Psoas muscle (tissue), 8 donors: ENCODE measurements at regions of chr12 and their contacts with region 1.

Region 1: DNA sequence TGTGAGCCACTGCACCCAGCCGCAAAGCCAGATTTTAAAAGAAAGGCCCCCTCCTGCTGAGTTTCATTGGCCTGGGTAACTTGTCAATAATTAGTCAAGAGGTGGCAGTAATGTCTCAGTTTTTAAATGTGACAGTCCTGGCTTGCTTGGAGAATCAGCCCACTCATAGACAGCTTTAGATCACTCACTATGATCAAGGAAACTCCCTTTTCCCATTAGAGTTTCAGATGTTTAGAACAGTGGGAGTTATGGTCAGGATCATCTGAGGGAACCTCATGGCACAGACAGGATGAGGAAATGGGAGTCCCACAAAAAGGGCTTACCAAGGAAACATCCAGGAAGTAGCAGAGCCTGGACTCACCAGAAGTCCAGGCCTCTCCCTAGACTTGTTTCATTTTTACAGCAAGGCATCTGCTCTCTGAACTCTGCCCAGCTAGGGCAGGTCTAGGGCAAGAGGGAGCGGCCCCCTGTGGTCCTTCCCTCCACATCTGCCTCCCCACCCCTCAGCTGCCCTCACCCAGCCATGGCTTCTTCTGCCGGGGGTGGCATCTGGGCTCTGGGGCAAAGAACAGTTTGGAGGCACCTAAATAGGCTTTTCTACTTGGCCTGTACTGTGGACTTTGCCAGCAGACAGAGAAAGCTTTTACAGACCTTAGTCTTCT is 11.2 kb downstream of the BCL2L14 start:
- DNase-seq: no peak
- ATAC-seq: peak; percentile 58 to 90 (median 75)
- H3K4me3 ChIP-seq: no peak overlapping the region
- H3K27ac ChIP-seq: peak overlapping the region; percentile 39
- H3K4me1 ChIP-seq: no peaks in the 10 kb centered on the region
- H3K27me3 ChIP-seq: no peaks in the 10 kb centered on the region
- CTCF ChIP-seq: peak; percentile 48

Region 2: GRCh38 chr12:12115514-12115913 is 33.5 kb after region 1 on chr12:
- intact Hi-C with region 1: no loop called
- DNase-seq: no peak
- ATAC-seq: no peak
- H3K4me3 ChIP-seq: no peak overlapping the region
- H3K27ac ChIP-seq: no peak overlapping the region
- H3K4me1 ChIP-seq: no peaks in the 10 kb centered on the region
- H3K27me3 ChIP-seq: no peaks in the 10 kb centered on the region
- CTCF ChIP-seq: no peak

Region 3: GRCh38 chr12:12327802-12328201 is 245.8 kb after region 1 on chr12:
- intact Hi-C with region 1: loop called (anchors 2 to 5 kb)
- DNase-seq: no peak
- ATAC-seq: peak in 1 of 4 donors; percentile 63
- H3K4me3 ChIP-seq: no peak overlapping the region
- H3K27ac ChIP-seq: no peak overlapping the region
- H3K4me1 ChIP-seq: no peaks in the 10 kb centered on the region
- H3K27me3 ChIP-seq: no peaks in the 10 kb centered on the region
- CTCF ChIP-seq: peak; percentile 73

Region 4: DNA sequence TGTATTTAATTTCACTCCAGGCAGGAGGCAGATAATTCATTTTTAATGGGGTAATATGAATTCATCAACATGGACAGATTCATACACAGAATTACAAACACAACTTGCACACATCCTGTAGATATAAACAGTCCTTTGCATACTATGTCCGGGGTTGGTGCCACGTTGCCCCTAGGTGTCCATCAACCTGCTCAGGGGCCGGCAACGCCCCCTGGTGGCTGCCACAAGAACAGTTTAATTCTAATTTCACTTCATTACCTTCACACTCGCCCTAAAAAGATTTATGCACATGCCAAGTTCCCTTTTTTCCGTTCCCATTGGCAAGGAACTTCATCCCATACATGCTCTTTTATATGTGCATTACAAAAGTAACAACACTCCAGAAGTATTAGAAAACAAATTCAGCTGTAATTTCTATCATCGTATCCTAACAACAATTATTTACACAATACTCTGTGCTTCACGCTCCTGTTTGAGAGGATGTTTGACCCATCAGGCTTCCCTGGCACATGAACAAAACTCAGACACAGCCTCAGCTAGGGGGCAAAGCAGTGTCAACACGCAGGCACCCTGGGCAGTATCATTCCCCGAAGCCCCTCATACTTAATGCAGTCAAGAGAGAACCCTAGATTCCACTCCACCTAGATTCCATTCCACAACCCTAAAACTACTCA is 252.5 kb after region 1 on chr12:
- intact Hi-C with region 1: loop called (anchors 2 to 5 kb)
- DNase-seq: peak; percentile 32 to 73
- ATAC-seq: peak; percentile 60 to 88 (median 73)
- H3K4me3 ChIP-seq: no peak overlapping the region
- H3K27ac ChIP-seq: no peak overlapping the region
- H3K4me1 ChIP-seq: no peaks in the 10 kb centered on the region
- H3K27me3 ChIP-seq: no peaks in the 10 kb centered on the region
- CTCF ChIP-seq: peak; percentile 86

Region 5: DNA sequence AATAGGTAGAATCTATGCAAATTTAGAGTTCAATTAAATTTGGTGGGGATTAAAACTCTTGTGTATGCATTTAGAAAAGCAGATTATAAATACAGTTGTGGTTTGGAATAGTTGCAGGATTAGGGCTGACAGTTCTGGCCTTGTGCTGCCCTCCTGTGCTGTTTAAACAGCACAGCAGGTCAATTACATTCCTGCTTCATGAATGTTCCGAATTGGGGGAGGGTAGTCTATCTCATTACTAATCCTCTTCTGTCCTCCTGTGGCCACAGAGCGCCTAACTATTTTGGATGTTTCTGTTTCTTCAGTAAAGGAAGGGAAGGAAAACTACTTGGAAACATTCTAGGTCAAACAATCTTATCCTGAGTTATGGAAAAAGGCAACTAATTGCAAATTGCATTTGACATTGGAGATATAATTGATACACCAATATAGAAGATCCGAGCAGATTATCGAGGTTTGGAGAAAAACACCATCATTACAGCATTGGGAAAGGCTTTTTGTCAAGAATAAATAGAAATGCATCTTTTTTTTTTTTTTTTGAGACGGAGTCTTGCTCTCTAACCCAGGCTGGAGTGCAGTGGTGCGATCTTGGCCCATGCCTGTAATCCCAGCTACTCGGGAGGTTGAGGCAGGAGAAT is 622.7 kb after region 1 on chr12:
- intact Hi-C with region 1: loop called in 1 of 2 experiments (anchors 10 kb)
- DNase-seq: peak in 1 of 2 donors; percentile 64
- ATAC-seq: peak; percentile 99 to 100 (median 100)
- H3K4me3 ChIP-seq: no peak overlapping the region
- H3K27ac ChIP-seq: no peak overlapping the region
- H3K4me1 ChIP-seq: no peaks in the 10 kb centered on the region
- H3K27me3 ChIP-seq: no peaks in the 10 kb centered on the region
- CTCF ChIP-seq: peak; percentile 88